WTC11 (cell line): ENCODE measurements at regions of chr1 and their contacts with region 1.

Region 1: GRCh38 chr1:206612129-206612876 is at the start of gene EIF2D:
- DNase-seq: peak; percentile 95
- ATAC-seq: peak; percentile 98
- H3K4me3 Mint-ChIP-seq: peak within 1 kb of the TSS; percentile 94
- H3K27ac Mint-ChIP-seq: peak within 1 kb of the TSS; percentile 97
- H3K4me1 Mint-ChIP-seq: peaks cover 12% of the 10 kb centered on the region
- H3K27me3 Mint-ChIP-seq: peaks cover 7% of the 10 kb centered on the region
- CTCF ChIP-seq: peak; percentile 88
- total RNA-seq, gene EIF2D: 35.7 to 36.8 TPM (median 35.9 TPM) in 3 replicates

Region 2: DNA sequence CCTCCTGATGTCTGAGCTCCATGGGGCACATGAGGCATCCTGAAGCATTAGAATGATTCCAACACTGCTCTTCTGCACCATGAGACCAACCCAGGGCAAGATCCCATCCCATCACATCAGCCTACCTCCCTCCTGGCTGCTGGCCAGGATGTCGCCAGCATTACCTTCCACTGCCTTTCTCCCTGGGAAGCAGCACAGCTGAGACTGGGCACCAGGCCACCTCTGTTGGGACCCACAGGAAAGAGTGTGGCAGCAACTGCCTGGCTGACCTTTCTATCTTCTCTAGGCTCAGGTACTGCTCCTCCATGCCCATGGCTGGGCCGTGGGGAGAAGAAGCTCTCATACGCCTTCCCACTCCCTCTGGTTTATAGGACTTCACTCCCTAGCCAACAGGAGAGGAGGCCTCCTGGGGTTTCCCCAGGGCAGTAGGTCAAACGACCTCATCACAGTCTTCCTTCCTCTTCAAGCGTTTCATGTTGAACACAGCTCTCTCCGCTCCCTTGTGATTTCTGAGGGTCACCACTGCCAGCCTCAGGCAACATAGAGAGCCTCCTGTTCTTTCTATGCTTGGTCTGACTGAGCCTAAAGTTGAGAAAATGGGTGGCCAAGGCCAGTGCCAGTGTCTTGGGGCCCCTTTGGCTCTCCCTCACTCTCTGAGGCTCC is 116.0 kb before region 1 on chr1:
- CTCF ChIA-PET with region 1: interaction called, 10 read pairs
- POLR2A ChIA-PET with region 1: no interaction called
- DNase-seq: no peak
- ATAC-seq: no peak
- H3K4me3 Mint-ChIP-seq: no peak overlapping the region
- H3K27ac Mint-ChIP-seq: no peak overlapping the region
- H3K4me1 Mint-ChIP-seq: peaks cover 7% of the 10 kb centered on the region; the same call in 1 of the 2 replicates
- H3K27me3 Mint-ChIP-seq: no peaks in the 10 kb centered on the region
- CTCF ChIP-seq: no peak

Region 3: DNA sequence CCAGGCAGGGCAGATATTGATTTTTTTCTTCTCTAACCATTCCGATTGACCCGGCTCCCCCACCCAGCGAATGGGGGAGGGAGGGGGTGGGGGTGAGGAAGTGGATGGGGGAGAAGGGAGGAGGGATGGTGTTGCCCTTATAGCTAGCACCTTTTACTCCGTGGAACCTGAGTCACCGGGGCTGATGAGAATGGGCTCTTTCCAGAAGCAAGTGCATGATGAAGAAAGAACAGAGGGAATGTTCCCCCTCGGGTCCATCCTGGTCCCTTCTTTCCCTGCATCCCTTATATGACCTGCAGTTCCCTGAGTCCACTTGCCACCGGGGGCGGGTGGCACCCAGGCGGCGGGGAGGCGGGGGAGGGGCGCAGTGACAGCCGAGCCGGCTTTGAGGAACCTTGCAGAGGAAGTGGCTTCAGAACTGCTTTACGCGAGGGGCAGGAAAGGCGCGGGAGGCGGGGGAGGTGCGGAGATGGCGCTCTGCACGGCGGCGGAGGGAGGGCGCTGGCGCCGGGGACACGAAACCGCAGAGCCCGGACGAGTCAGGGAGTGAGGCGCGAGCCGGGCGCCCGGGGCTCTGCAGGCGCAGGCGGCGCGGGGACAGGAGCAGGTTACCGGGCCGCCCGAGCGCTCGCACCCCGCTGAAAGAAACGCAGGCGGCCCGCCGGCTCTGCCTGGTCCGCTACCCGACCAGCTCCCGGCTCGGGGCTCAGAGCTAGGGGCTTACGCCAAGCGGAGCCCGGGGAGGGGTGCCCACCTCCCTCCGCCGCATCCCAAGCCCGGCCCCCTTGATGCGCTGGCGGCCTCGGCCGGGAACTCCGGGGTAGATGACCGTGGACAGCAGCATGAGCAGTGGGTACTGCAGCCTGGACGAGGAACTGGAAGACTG is 55.3 kb before region 1 on chr1:
- CTCF ChIA-PET with region 1: interaction called, 10 read pairs
- POLR2A ChIA-PET with region 1: no interaction called
- DNase-seq: peak; percentile 73
- ATAC-seq: peak; percentile 83
- H3K4me3 Mint-ChIP-seq: peak overlapping the region; percentile 70
- H3K27ac Mint-ChIP-seq: no peak overlapping the region
- H3K4me1 Mint-ChIP-seq: peaks cover 35% of the 10 kb centered on the region
- H3K27me3 Mint-ChIP-seq: peaks cover 36% of the 10 kb centered on the region
- CTCF ChIP-seq: no peak

Region 4: GRCh38 chr1:206628916-206629315 is 16.6 kb after region 1 on chr1:
- CTCF ChIA-PET with region 1: interaction called, 62 read pairs
- POLR2A ChIA-PET with region 1: interaction called, 4 read pairs
- DNase-seq: no peak
- ATAC-seq: no peak
- H3K4me3 Mint-ChIP-seq: no peak overlapping the region
- H3K27ac Mint-ChIP-seq: no peak overlapping the region
- H3K4me1 Mint-ChIP-seq: peaks cover 10% of the 10 kb centered on the region
- H3K27me3 Mint-ChIP-seq: peaks cover 3% of the 10 kb centered on the region; the same call in 1 of the 2 replicates
- CTCF ChIP-seq: no peak

Region 5: DNA sequence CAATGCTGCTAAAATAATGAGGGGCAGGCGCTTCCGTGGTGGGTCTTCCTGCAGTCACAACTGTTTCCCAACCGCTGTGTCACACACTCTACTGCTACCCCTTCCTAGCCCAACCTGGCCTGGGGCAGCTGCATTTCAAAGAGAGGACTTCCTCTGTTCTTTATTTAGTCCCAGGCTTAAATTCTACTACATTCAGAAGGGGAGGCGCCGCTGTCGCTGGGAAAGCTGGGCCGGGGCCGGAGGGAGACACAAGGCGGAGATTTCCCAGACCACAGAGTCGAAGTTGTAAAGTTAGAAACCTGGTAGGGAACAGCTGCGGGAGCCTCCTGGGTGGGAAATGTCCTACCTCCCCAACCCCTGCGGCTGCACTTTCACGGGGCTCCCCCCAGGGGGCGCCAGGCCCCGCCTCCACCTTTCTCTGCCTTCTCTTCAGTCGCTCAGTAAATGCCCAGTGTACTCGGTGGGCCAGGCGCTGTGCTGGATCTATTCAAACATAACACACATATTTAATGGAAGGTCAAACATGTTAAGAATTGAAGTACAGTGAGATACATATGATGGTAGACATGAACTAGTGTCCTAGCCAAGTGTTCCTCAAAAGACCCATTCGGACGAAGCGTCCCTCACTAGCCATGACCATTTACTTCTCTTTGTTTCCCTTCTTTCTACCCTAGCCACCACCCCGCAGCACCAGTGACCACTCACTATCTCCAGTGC is 46.1 kb after region 1 on chr1:
- CTCF ChIA-PET with region 1: interaction called, 38 read pairs
- POLR2A ChIA-PET with region 1: no interaction called
- DNase-seq: peak; percentile 79
- ATAC-seq: peak; percentile 91
- H3K4me3 Mint-ChIP-seq: peak overlapping the region; percentile 58
- H3K27ac Mint-ChIP-seq: no peak overlapping the region
- H3K4me1 Mint-ChIP-seq: peaks cover 20% of the 10 kb centered on the region
- H3K27me3 Mint-ChIP-seq: peaks cover 43% of the 10 kb centered on the region
- CTCF ChIP-seq: peak; percentile 97

Region 6: GRCh38 chr1:206663832-206664652 is 51.7 kb after region 1 on chr1:
- CTCF ChIA-PET with region 1: interaction called, 38 read pairs
- POLR2A ChIA-PET with region 1: no interaction called
- DNase-seq: peak; percentile 83
- ATAC-seq: peak; percentile 90
- H3K4me3 Mint-ChIP-seq: peak overlapping the region; percentile 58
- H3K27ac Mint-ChIP-seq: no peak overlapping the region
- H3K4me1 Mint-ChIP-seq: peaks cover 9% of the 10 kb centered on the region; the same call in 1 of the 2 replicates
- H3K27me3 Mint-ChIP-seq: peaks cover 26% of the 10 kb centered on the region
- CTCF ChIP-seq: peak; percentile 86

Region 7: GRCh38 chr1:206684478-206685333 is 72.4 kb after region 1 on chr1 and contains the start of gene MAPKAPK2:
- CTCF ChIA-PET with region 1: interaction called, 12 read pairs
- POLR2A ChIA-PET with region 1: no interaction called
- DNase-seq: peak; percentile 68
- ATAC-seq: peak; percentile 45
- H3K4me3 Mint-ChIP-seq: peak within 1 kb of the TSS; percentile 86
- H3K27ac Mint-ChIP-seq: peak within 1 kb of the TSS; percentile 60; the same call in 1 of the 2 replicates
- H3K4me1 Mint-ChIP-seq: peaks cover 43% of the 10 kb centered on the region
- H3K27me3 Mint-ChIP-seq: peaks cover 59% of the 10 kb centered on the region
- CTCF ChIP-seq: no peak
- total RNA-seq, gene MAPKAPK2: 46.4 to 54.9 TPM (median 48.9 TPM) in 3 replicates

Region 8: DNA sequence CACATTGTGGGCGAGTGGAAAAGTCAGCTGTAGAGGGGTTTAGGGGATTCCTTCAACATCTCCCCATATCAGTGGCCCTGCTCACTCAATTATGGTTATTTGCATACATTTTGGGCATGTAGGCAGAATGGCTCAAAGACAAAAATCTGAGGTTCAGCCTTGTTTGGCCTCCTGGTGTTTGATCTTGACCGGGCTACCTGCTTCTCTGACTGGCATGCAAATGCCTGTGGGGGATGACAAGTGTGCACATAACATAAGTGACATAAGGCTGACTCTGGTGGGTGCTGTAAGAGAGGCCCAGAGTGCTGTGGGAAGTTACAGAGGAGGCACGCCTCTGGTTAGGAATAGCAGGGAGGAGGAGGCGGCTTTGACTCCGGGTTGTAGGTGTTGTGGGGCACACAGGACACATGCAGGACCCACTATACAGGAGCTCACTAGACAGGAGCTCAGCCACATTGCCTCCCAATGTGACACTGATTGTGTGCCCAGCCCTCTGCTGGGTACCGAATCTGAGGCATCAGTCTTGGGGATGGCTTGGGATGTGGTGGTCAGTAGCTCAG is 128.9 kb after region 1 on chr1:
- CTCF ChIA-PET with region 1: no interaction called
- POLR2A ChIA-PET with region 1: no interaction called
- DNase-seq: no peak
- ATAC-seq: no peak
- H3K4me3 Mint-ChIP-seq: no peak overlapping the region
- H3K27ac Mint-ChIP-seq: no peak overlapping the region
- H3K4me1 Mint-ChIP-seq: peaks cover 14% of the 10 kb centered on the region
- H3K27me3 Mint-ChIP-seq: no peaks in the 10 kb centered on the region; the same call in none of the 2 replicates
- CTCF ChIP-seq: no peak